Calu3 (cell line): ENCODE measurements at regions of chr10 and their contacts with region 1.

Region 1: DNA sequence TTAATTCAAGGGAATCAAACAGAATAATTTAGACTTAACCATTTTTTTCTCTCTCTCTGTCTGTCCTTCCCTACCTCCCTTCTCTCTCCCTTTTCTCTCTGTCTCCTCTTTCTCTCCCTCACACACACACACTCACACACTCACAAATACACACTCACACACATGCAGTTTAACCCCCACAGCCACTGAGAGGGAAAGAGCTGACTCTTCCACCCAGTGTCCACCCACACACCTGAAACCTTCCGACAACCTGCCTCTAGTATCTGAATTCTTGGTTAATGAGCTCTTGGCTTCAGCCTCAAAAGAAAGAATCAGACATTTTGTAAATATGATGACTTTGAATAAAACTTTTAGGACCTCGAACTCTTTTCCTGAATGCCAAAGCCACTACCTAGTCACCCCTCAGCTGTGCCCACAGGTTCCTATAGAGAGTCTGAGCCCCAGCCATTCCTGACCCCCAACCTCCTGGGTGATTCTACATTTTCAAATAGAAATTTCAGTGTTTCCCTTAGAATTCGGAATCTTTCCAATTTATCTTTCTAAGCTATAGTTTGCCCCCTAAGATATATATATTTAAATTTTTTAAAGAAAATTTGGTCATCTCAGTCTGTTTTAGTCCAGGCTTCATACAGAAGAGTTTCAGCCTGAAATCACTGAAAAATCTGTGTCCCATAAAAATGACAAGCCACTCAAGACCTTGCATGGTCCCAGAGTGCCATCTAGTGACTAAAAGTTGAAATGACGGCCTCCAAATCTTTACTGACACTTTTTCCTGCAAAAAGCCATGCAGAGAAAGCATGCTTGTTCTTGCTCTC is 202.8 kb downstream of the IPMK start:
- DNase-seq: peak; percentile 61
- H3K4me3 Mint-ChIP-seq: peak overlapping the region; percentile 1
- H3K27ac Mint-ChIP-seq: peak overlapping the region; percentile 15
- H3K4me1 Mint-ChIP-seq: peaks cover 26% of the 10 kb centered on the region
- H3K27me3 Mint-ChIP-seq: no peaks in the 10 kb centered on the region
- CTCF ChIP-seq: peak; percentile 87

Region 2: DNA sequence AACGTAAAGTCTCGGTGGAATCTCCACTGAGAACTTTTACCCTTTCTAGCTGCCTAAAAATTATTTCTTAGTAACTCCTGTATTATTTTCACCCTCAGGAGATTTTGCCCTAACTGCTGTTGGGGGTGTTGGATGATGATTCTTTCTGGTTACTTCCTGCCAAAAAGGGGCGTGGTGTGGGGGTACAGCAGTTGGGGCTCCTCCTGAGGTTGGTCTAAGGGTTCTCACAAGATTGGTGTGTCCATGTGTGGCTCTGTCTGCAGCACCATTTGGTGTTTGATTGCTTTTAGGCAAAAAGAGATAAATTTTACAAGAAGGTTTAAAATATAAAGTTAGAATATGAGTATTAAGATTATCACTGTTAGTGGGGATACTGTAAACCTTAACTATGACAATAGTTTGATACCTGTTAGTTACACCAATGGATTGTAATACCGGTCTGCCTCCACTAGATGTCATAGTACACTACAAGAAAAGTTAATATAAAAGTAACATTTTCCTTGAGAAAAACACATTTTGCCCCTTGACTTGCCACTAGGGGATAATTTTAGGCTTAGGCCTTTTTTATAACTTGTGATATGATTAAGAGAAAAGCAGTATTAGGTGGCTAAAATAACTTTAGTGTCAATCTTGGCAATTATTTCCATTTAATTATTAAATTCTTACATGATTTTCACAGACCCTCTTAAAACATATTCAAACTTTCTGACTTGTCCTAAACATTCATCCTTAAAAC is 725.9 kb before region 1 on chr10:
- CTCF ChIA-PET with region 1: no interaction called
- intact Hi-C with region 1: loop called (anchors 2 kb)
- DNase-seq: peak; percentile 45
- H3K4me3 Mint-ChIP-seq: no peak overlapping the region
- H3K27ac Mint-ChIP-seq: no peak overlapping the region
- H3K4me1 Mint-ChIP-seq: no peaks in the 10 kb centered on the region
- H3K27me3 Mint-ChIP-seq: no peaks in the 10 kb centered on the region
- CTCF ChIP-seq: peak; percentile 79

Region 3: GRCh38 chr10:57579926-57580325 is 485.0 kb before region 1 on chr10:
- CTCF ChIA-PET with region 1: no interaction called
- intact Hi-C with region 1: loop called (anchors 1 kb)
- DNase-seq: peak; percentile 51
- H3K4me3 Mint-ChIP-seq: no peak overlapping the region
- H3K27ac Mint-ChIP-seq: peak overlapping the region; percentile 42
- H3K4me1 Mint-ChIP-seq: no peaks in the 10 kb centered on the region
- H3K27me3 Mint-ChIP-seq: no peaks in the 10 kb centered on the region
- CTCF ChIP-seq: peak; percentile 62

Region 4: DNA sequence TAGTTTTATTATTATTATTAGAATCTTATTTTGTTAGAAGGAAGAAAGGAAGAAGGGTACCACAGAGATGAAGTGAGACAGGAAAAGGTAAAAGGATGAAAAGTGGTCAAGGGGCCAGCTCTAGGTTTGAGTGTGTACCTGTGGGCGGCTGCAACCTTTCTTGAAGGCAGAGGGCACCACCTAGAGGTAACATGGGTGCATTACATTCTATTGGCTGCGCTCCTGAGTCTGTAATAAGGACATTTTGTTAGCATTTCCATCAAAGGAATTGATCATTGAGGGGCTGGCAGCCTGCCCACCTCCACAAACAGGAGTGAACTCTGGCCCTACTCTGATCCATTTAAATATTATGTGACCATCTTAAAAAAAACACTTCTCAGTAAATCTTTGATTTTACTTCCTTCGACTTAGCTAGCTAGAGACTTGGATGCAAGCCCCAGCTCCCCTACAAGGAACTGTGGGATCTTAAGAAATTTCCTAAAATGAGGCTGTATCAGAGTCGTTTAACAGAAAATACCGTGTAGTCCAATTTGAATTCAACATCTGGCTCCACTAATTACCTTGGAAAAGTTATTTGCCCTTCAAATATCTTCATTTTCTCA is 407.7 kb before region 1 on chr10:
- CTCF ChIA-PET with region 1: interaction called, 4 read pairs
- intact Hi-C with region 1: loop called (anchors 2 kb)
- DNase-seq: peak; percentile 75
- H3K4me3 Mint-ChIP-seq: no peak overlapping the region
- H3K27ac Mint-ChIP-seq: no peak overlapping the region
- H3K4me1 Mint-ChIP-seq: no peaks in the 10 kb centered on the region
- H3K27me3 Mint-ChIP-seq: no peaks in the 10 kb centered on the region
- CTCF ChIP-seq: peak; percentile 94

Region 5: GRCh38 chr10:57716886-57717285 is 348.0 kb before region 1 on chr10:
- CTCF ChIA-PET with region 1: no interaction called
- intact Hi-C with region 1: loop called (anchors 1 kb)
- DNase-seq: peak; percentile 12
- H3K4me3 Mint-ChIP-seq: no peak overlapping the region
- H3K27ac Mint-ChIP-seq: no peak overlapping the region
- H3K4me1 Mint-ChIP-seq: peaks cover 25% of the 10 kb centered on the region
- H3K27me3 Mint-ChIP-seq: no peaks in the 10 kb centered on the region
- CTCF ChIP-seq: peak; percentile 50

Region 6: GRCh38 chr10:57864765-57865676 is 199.9 kb before region 1 on chr10:
- CTCF ChIA-PET with region 1: no interaction called
- intact Hi-C with region 1: loop called (anchors 10 kb)
- DNase-seq: peak; percentile 48
- H3K4me3 Mint-ChIP-seq: peak overlapping the region; percentile 21
- H3K27ac Mint-ChIP-seq: peak overlapping the region; percentile 81
- H3K4me1 Mint-ChIP-seq: peaks cover 64% of the 10 kb centered on the region
- H3K27me3 Mint-ChIP-seq: no peaks in the 10 kb centered on the region
- CTCF ChIP-seq: no peak

Region 7: DNA sequence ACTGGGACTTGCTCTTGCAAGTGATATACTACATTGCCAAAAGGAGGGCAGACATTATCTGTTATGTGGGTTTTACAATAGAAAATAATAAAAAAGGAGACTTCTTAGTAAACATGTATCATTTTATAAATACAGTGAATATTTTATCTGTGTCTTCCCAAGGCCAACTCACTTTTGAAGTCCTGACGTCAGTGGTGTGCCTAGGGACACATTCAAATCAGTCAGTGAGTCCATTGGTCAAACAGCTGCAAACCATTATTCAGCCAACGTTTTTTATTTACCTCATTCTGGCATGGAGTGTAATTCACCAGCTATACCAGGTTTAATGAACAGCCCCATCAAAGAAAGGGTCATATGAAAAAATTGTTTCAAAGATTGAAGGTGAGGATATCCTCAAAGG is 61.0 kb before region 1 on chr10:
- CTCF ChIA-PET with region 1: no interaction called
- intact Hi-C with region 1: no loop called
- DNase-seq: no peak
- H3K4me3 Mint-ChIP-seq: no peak overlapping the region
- H3K27ac Mint-ChIP-seq: no peak overlapping the region
- H3K4me1 Mint-ChIP-seq: peaks cover 6% of the 10 kb centered on the region
- H3K27me3 Mint-ChIP-seq: no peaks in the 10 kb centered on the region
- CTCF ChIP-seq: no peak

Region 8: DNA sequence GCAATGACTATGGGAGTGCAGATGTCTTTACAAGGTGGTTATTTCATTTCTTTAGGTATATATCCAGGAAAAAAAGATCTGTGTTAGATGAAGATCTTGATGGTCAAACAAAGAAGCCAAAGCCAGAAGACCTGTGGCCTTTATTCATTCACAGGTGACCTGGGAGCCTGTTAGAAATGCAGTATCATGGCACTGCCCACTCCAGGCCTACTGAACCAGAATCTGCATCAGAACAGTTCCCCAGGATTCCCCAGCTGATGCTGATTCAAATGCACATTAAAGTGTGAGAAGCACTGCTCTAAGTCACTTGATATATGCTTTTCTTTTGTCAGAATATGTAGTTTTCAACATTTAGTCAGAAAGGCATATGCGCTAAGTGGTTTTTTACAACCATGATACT is 48.3 kb before region 1 on chr10:
- CTCF ChIA-PET with region 1: no interaction called
- intact Hi-C with region 1: no loop called
- DNase-seq: no peak
- H3K4me3 Mint-ChIP-seq: no peak overlapping the region
- H3K27ac Mint-ChIP-seq: no peak overlapping the region
- H3K4me1 Mint-ChIP-seq: peaks cover 47% of the 10 kb centered on the region
- H3K27me3 Mint-ChIP-seq: no peaks in the 10 kb centered on the region
- CTCF ChIP-seq: no peak

Region 9: GRCh38 chr10:58028597-58029366 is 36.1 kb before region 1 on chr10:
- CTCF ChIA-PET with region 1: no interaction called
- intact Hi-C with region 1: no loop called
- DNase-seq: no peak
- H3K4me3 Mint-ChIP-seq: no peak overlapping the region
- H3K27ac Mint-ChIP-seq: no peak overlapping the region
- H3K4me1 Mint-ChIP-seq: peaks cover 16% of the 10 kb centered on the region
- H3K27me3 Mint-ChIP-seq: no peaks in the 10 kb centered on the region
- CTCF ChIP-seq: no peak